CD14-positive monocyte (primary cell): ENCODE measurements at regions of chr1 and their contacts with region 1.

Region 1: GRCh38 chr1:88891318-88891950 is at the start of gene GTF2B:
- DNase-seq: peak; percentile 97 to 98 (median 97)
- H3K4me3 ChIP-seq: peak within 1 kb of the TSS; percentile 58 to 97 (median 89)
- H3K4me3 Mint-ChIP-seq: peak within 1 kb of the TSS; percentile 92 to 98
- H3K27ac ChIP-seq: peak within 1 kb of the TSS; percentile 73 to 90
- H3K27ac Mint-ChIP-seq: peak within 1 kb of the TSS; percentile 94 to 98 (median 97)
- H3K4me1 ChIP-seq: peaks cover 24 to 32% of the 10 kb centered on the region in 2 donors
- H3K4me1 Mint-ChIP-seq: peaks cover 28% of the 10 kb centered on the region
- H3K27me3 ChIP-seq: no peaks in the 10 kb centered on the region
- H3K27me3 Mint-ChIP-seq: peaks cover 0 to 4% (median 0%) of the 10 kb centered on the region in 3 donors
- CTCF ChIP-seq: no peak
- polyA plus RNA-seq, gene GTF2B: 26.9 to 46.1 (median 39.2) TPM

Region 2: DNA sequence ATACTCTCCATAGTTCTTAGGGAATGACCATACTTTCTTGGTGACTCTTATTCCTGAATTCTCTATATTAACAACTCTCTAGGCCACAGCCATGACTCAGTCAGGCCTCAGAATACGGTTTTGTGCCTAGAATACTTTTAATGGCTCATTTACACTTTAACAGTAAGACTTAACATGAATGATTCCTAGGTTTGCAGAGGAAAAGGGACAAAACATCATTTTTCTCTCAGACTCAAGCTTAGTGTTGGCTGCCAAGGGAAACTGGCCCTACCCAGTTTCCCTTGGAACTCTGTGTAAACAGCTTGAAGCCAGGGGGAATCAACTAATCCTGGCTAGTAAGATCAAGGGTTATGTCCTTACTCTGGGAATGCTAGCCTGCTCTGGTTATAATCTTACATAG is 372.3 kb before region 1 on chr1:
- intact Hi-C with region 1: no loop called
- DNase-seq: no peak
- H3K4me3 ChIP-seq: no peak overlapping the region
- H3K4me3 Mint-ChIP-seq: no peak overlapping the region
- H3K27ac ChIP-seq: no peak overlapping the region
- H3K27ac Mint-ChIP-seq: no peak overlapping the region
- H3K4me1 ChIP-seq: no peaks in the 10 kb centered on the region
- H3K4me1 Mint-ChIP-seq: no peaks in the 10 kb centered on the region
- H3K27me3 ChIP-seq: no peaks in the 10 kb centered on the region
- H3K27me3 Mint-ChIP-seq: no peaks in the 10 kb centered on the region
- CTCF ChIP-seq: no peak

Region 3: DNA sequence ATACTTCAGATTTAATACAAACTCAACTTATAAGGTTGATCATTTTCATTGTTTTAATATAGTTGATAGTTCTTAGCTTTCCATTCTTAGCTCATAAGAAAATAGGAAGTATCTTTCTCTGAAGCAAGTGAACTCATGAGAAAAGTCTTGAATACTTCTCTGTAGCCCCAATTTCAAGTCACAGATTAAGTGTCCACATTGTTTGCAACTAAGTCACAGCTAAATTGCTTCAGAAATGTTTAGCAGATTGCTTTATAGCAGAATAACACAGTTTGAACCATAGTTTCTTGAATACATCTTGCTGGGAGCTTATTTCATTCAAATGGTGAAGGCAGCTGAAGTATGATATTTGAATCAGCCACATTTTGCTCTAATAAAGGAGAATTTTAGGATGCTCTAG is 218.0 kb before region 1 on chr1:
- intact Hi-C with region 1: no loop called
- DNase-seq: no peak
- H3K4me3 ChIP-seq: no peak overlapping the region
- H3K4me3 Mint-ChIP-seq: no peak overlapping the region
- H3K27ac ChIP-seq: no peak overlapping the region
- H3K27ac Mint-ChIP-seq: no peak overlapping the region
- H3K4me1 ChIP-seq: no peaks in the 10 kb centered on the region
- H3K4me1 Mint-ChIP-seq: no peaks in the 10 kb centered on the region
- H3K27me3 ChIP-seq: no peaks in the 10 kb centered on the region
- H3K27me3 Mint-ChIP-seq: peaks cover 0 to 3% (median 2%) of the 10 kb centered on the region in 3 donors
- CTCF ChIP-seq: no peak

Region 4: DNA sequence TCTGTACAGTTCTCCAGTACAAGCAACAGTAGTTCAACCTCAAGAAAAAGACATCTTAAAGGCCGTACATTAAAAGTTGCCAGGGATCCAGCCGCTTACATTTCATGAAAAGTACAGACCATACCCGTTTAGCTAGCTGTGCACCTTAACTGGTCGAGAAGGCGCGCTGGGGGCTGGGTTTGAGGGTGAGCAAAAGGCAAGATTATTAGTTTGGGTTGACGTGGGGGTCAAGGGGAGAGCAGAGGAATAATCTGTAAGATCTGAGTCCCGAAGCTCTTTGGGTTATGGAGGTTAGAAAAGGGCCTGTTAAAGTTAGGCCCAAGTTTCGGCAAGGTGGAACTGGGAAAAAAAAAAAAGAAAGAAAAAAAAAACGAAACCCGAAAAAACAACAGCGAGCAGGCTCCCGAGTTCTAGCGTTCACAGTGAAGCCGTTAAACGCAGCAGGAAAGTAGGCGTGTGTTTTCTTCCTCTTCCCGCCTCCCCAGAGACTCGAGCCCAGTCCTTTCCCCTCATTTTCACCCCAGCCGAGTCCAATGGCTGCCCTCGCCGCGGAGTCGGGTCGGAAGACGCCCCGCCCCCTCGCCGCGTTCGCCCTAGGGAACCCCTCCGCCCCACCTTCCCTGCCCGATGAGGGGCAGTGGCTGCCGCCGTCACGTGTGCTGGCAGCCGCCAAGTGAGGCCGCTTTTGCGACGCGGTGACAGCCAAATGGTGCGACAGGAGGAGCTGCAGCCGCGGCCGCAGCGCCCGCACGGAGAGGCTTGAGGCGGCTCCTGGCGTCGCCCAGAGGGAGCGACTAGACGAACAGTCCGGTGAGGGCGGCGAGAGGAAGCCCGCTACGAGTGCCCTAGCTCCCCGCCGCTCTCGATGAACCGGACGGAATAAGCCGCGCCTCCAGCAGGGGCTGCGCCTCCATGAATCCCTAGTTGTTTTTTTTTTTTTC is 207.6 kb before region 1 on chr1 and contains the start of gene PKN2:
- intact Hi-C with region 1: loop called (anchors 5 kb)
- DNase-seq: peak; percentile 99
- H3K4me3 ChIP-seq: peak within 1 kb of the TSS; percentile 92 to 99 (median 93)
- H3K4me3 Mint-ChIP-seq: peak within 1 kb of the TSS; percentile 95 to 99
- H3K27ac ChIP-seq: peak within 1 kb of the TSS; percentile 94 to 97
- H3K27ac Mint-ChIP-seq: peak within 1 kb of the TSS; percentile 92 to 98 (median 96)
- H3K4me1 ChIP-seq: peaks cover 14 to 30% of the 10 kb centered on the region in 2 donors
- H3K4me1 Mint-ChIP-seq: peaks cover 22% of the 10 kb centered on the region
- H3K27me3 ChIP-seq: no peaks in the 10 kb centered on the region
- H3K27me3 Mint-ChIP-seq: no peaks in the 10 kb centered on the region
- CTCF ChIP-seq: no peak
- polyA plus RNA-seq, gene PKN2: 6.9 to 23.0 (median 8.7) TPM

Region 5: GRCh38 chr1:88746916-88747315 is 144.5 kb before region 1 on chr1:
- intact Hi-C with region 1: no loop called
- DNase-seq: no peak
- H3K4me3 ChIP-seq: no peak overlapping the region
- H3K4me3 Mint-ChIP-seq: no peak overlapping the region
- H3K27ac ChIP-seq: no peak overlapping the region
- H3K27ac Mint-ChIP-seq: peak overlapping the region in 2 of 7 donors; percentile 10 to 41
- H3K4me1 ChIP-seq: no peaks in the 10 kb centered on the region
- H3K4me1 Mint-ChIP-seq: peaks cover 5% of the 10 kb centered on the region
- H3K27me3 ChIP-seq: no peaks in the 10 kb centered on the region
- H3K27me3 Mint-ChIP-seq: peaks cover 0 to 1% (median 0%) of the 10 kb centered on the region in 3 donors
- CTCF ChIP-seq: no peak

Region 6: DNA sequence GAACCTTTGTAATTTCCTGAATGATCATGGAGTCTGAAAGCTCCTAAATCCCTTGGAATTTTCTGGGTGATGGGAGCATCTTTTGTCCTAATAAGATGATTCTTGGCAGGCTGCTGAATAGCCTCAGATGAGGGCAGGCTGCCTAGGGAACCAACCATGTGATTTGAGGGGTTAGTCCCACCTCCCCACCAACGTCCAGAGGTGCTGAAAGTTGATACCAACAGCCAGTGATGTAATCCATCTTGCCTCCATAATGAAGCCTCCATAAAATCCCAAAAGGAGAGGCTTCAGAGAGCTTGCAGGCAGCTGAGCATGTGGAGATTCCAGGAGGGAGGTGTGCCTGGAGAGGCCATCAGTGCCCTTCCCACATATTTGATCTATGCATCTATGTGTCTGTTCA is 43.8 kb before region 1 on chr1:
- intact Hi-C with region 1: no loop called
- DNase-seq: no peak
- H3K4me3 ChIP-seq: no peak overlapping the region
- H3K4me3 Mint-ChIP-seq: no peak overlapping the region
- H3K27ac ChIP-seq: no peak overlapping the region
- H3K27ac Mint-ChIP-seq: no peak overlapping the region
- H3K4me1 ChIP-seq: no peaks in the 10 kb centered on the region
- H3K4me1 Mint-ChIP-seq: no peaks in the 10 kb centered on the region
- H3K27me3 ChIP-seq: no peaks in the 10 kb centered on the region
- H3K27me3 Mint-ChIP-seq: peaks cover 0 to 3% (median 2%) of the 10 kb centered on the region in 3 donors
- CTCF ChIP-seq: no peak